Right ventricle myocardium superior (tissue), 1 donor: ENCODE measurements at regions of chr12 and their contacts with region 1.

Region 1: GRCh38 chr12:29317556-29318363 is 63.2 kb downstream of the ERGIC2 start:
- DNase-seq: peak; percentile 53
- ATAC-seq: peak; percentile 97

Region 2: DNA sequence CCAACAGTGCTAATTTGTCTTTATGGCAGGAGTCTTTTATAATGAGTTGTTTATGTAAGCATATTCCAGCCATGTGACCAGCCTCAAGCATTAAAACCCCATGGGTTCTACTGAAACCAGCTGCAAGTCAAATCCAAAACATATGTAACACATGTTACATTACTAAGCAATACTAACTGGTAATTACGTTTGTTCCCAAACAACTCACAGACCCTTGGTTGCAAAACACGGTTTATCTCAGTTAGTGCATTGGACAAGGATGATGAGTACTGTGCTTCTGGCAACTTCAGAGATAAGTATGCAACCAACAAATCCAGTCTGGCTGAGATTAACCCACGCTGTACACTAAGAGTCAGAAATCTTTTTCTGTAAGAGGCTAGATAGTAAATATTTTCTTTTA is 278.7 kb before region 1 on chr12:
- intact Hi-C with region 1: no loop called
- DNase-seq: no peak
- ATAC-seq: no peak

Region 3: DNA sequence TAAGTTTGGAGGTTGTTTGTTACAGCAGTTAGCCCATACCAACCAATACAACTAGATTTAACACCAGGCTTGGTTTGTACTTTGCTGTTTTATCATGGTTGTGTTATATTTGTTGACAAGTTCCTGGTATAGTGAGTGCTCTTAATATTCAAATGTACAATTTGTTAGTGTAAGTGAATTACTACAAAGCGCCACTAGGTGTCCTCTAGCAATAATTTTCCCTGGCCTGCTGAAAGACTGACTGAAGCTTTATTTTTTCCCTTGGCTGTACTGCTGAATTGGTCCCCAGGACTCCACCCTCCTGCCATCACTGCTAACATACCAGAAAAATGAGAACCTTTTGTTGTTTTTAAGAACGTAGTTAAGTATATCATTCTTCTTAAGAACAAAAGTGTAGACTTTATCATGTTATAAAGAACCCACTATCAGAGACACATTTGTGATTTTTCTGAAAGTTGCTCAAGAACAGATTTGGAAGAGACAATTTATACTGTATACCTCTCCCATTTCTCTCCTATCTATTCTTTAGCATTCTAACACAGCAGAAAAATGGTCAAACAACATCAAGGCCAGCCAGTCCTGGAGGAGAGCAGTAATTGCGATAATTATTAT is 244.0 kb before region 1 on chr12:
- intact Hi-C with region 1: loop called (anchors 5 kb)
- DNase-seq: no peak
- ATAC-seq: peak; percentile 82

Region 4: GRCh38 chr12:29226616-29227015 is 91.1 kb before region 1 on chr12:
- intact Hi-C with region 1: no loop called
- DNase-seq: no peak
- ATAC-seq: no peak